ENCODE measurements at regions of chr15 and their contacts with region 1.

Region 1: GRCh38 chr15:88246666-88247446 is 9.7 kb downstream of the NTRK3 start:
- DNase-seq: peak; percentile 66 to 78
- ATAC-seq: peak; percentile 78 to 91 (median 84)
- H3K4me3 ChIP-seq: peak overlapping the region in 1 of 10 donors; percentile 13
- H3K27ac ChIP-seq: no peak overlapping the region
- H3K4me1 ChIP-seq: peaks cover 0 to 19% (median 8%) of the 10 kb centered on the region in 9 donors
- H3K27me3 ChIP-seq: peaks cover 0 to 16% (median 3%) of the 10 kb centered on the region in 7 donors
- CTCF ChIP-seq: peak; percentile 87 to 97 (median 96)

Region 2: GRCh38 chr15:86624261-86625036 is 1622.4 kb before region 1 on chr15:
- intact Hi-C with region 1: loop called in 5 of 10 experiments (anchors 2 to 10 kb)
- DNase-seq: peak; percentile 71 to 75
- ATAC-seq: peak; percentile 96 to 100 (median 98)
- H3K4me3 ChIP-seq: no peak overlapping the region
- H3K27ac ChIP-seq: peak overlapping the region in 5 of 10 donors; percentile 3 to 50 (median 34)
- H3K4me1 ChIP-seq: peaks cover 0 to 11% (median 0%) of the 10 kb centered on the region in 9 donors
- H3K27me3 ChIP-seq: no peaks in the 10 kb centered on the region
- CTCF ChIP-seq: peak; percentile 27 to 66 (median 50)

Region 3: DNA sequence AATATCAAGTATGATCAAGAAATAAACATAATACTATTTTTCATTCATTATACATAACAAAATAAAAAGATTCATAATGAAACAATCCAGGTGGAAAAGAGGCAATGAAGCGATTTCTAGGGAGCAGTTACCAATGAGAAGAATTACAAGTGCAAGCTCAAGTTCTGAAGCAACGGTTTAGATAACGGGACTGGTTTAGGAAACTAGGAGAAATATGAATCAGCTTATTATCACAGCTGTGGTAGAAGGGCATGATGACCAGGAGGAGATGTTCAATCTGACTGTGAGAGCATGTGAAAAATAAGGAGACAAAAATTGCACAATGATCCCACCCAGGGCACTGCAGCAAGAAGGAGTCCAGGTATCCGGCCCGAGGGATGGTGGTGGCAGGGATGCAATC is 1324.2 kb before region 1 on chr15:
- intact Hi-C with region 1: loop called in 7 of 10 experiments (anchors 2 to 10 kb)
- DNase-seq: no peak
- ATAC-seq: no peak
- H3K4me3 ChIP-seq: no peak overlapping the region
- H3K27ac ChIP-seq: no peak overlapping the region
- H3K4me1 ChIP-seq: peaks cover 0 to 6% (median 0%) of the 10 kb centered on the region in 9 donors
- H3K27me3 ChIP-seq: no peaks in the 10 kb centered on the region
- CTCF ChIP-seq: no peak

Region 4: DNA sequence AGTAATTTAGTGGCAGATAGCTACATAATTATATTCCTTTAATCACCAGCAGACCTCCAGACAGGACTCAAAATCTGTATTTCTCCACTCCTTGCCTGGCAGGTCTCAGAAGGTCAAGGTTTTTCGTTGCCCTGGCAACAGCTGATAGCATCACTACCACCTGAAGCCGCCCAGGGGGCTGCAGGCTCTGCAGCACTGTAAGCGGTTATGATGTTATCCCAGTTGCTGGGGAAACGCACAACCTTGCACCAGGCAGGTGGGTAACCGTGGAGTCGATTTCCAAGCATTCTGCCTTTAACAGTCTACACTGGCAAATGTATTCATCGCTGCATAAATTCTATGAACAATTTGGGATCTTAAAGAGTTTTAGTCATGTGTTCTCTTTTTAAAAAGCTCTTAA is 746.6 kb before region 1 on chr15:
- intact Hi-C with region 1: no loop called
- DNase-seq: no peak
- ATAC-seq: no peak
- H3K4me3 ChIP-seq: no peak overlapping the region
- H3K27ac ChIP-seq: no peak overlapping the region
- H3K4me1 ChIP-seq: peaks cover 0 to 21% (median 9%) of the 10 kb centered on the region in 9 donors
- H3K27me3 ChIP-seq: no peaks in the 10 kb centered on the region
- CTCF ChIP-seq: no peak

Region 5: DNA sequence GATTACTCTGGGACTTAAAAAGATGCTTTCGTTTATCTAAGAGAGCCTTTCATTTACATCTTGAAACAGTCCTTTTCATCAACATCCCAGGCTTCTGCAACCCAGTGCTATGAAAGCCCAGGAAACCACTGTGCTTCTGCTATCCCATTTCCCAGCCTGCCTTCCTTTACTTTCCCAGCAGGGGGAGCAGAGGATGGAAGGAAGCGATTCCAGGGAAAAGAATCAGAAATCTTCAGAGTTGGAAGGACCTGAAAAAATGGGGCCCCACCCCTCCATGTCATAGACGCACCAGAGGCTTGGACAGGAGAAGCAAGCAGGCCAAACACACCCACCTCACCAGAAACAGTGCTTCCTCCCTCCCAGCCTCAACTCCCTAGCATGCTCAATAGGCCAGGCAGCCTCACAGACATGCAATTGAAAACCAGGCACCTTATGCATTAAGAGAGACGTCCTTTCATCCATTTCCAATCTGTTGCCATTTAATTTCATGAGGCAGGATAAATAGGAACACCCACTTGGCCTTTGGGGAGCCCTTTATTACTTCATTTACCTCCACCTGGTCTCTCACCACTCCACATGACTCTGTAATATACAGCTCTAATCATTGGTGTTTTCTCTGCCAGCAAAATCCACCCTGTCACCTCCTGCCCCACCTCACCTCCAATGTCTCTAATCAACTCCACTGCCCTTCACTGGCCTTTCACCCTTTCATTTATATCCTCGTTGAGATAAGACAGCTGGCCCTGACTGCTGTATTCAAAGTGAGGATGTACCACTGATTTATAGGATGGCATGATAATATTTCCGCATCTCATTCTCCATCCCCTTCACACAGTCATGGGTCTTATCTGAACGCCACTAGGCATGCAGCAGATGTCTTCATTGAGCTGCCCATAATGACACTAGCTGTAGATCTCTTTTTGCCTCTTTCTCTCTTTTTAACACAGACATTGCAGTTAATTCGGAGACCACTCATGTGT is 574.3 kb before region 1 on chr15:
- intact Hi-C with region 1: loop called in 5 of 10 experiments (anchors 5 to 10 kb)
- DNase-seq: peak in 1 of 2 donors; percentile 23
- ATAC-seq: peak in 2 of 8 donors; percentile 41 to 49
- H3K4me3 ChIP-seq: no peak overlapping the region
- H3K27ac ChIP-seq: no peak overlapping the region
- H3K4me1 ChIP-seq: peaks cover 0 to 7% (median 0%) of the 10 kb centered on the region in 9 donors
- H3K27me3 ChIP-seq: no peaks in the 10 kb centered on the region
- CTCF ChIP-seq: peak in 8 of 9 donors; percentile 30 to 69 (median 62)

Region 6: DNA sequence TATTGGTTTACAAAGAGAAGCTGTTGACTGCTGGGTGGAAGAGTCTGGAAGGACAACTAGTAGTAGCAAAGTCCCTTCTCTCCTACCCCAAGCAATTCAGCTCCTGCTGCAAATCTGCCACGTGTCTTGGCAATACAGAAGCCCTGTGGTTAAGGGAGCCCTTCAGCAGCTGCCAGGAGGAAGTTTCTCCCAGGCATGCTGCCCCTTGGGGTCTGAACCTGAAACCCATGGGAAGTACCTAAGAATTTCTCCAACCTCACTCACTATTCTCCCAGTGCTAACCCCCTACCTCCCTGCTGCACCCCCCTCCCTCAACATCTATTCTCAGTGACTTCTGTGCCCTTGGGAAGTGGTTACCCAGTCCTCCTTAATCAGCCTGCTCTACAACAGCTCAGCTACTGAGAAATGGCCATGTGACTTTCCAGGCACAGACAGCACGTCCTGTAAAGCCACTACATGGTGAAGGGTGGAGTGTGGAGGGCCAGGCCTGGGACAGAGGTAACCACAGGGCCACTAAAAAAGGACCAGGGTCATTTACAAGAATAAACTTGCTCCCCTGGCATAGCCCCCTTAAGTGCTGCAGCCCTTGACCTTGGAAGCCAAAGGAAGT is 306.9 kb before region 1 on chr15:
- intact Hi-C with region 1: loop called in 1 of 10 experiments (anchors 10 kb)
- DNase-seq: no peak
- ATAC-seq: peak; percentile 38 to 90 (median 70)
- H3K4me3 ChIP-seq: no peak overlapping the region
- H3K27ac ChIP-seq: peak overlapping the region in 1 of 10 donors; percentile 10
- H3K4me1 ChIP-seq: peaks cover 0 to 19% (median 7%) of the 10 kb centered on the region in 9 donors
- H3K27me3 ChIP-seq: no peaks in the 10 kb centered on the region
- CTCF ChIP-seq: no peak

Region 7: GRCh38 chr15:88323976-88324740 is 77.3 kb after region 1 on chr15:
- intact Hi-C with region 1: no loop called
- DNase-seq: no peak
- ATAC-seq: no peak
- H3K4me3 ChIP-seq: no peak overlapping the region
- H3K27ac ChIP-seq: no peak overlapping the region
- H3K4me1 ChIP-seq: no peaks in the 10 kb centered on the region
- H3K27me3 ChIP-seq: peaks cover 0 to 34% (median 22%) of the 10 kb centered on the region in 7 donors
- CTCF ChIP-seq: no peak

Region 8: DNA sequence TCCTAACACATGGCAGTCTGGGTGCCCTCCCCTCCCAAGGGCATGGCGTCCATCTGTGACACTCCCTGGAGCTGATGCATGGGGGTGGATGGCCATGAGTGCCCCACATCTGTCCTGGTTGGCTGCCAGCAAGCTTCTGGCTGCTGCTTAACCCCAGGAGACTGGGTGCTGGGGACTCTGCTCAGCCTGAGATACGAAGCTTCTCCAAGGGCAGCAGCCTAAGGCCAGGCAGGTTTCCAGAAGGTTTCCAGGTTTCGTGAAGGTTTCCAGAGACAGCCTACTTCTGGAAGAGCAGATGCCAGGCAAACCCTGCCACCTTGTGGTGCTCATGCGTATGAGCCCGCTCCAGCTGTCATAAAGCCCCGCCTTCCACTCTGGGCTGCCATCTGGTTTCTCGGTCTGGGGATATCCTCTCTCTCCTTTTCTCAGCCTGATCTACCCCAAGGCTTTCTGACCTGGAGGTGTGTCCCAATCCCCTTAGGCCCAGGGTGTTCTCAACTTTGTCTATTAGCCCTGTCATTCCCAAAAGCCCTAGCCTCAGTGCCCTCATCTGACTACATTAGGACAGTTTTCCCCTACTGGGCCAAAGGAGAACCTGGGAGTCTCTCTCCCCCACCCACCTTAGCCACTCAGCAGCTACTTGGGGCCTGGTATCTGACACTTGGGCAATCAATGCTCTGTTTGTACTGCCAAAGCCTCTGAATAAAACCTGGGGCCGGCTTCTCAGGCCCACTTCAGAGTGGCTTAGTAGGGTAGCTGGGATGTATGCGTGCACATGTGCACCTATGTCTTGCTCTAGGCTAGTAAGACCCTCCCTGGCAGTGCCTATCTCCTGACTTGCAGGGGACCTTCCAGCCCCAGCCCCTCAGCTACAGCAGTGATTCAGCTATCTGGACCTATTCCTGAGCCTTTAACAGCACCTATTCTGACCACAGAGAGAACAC is 208.3 kb after region 1 on chr15:
- intact Hi-C with region 1: loop called in 1 of 10 experiments (anchors 5 kb)
- DNase-seq: peak; percentile 37 to 43
- ATAC-seq: peak; percentile 67 to 88 (median 80)
- H3K4me3 ChIP-seq: no peak overlapping the region
- H3K27ac ChIP-seq: peak overlapping the region in 2 of 10 donors; percentile 30 to 44
- H3K4me1 ChIP-seq: peaks cover 0 to 20% (median 10%) of the 10 kb centered on the region in 9 donors
- H3K27me3 ChIP-seq: peaks cover 0 to 1% (median 0%) of the 10 kb centered on the region in 7 donors
- CTCF ChIP-seq: peak; percentile 38 to 72 (median 59)

Measured in heart right ventricle (tissue), 16 donors.